ENCODE measurements at regions of chr1 and their contacts with region 1.

Region 1: GRCh38 chr1:40040511-40041465 is at the start of gene CAP1:
- DNase-seq: peak; percentile 91
- ATAC-seq: peak; percentile 88
- H3K4me3 ChIP-seq: peak within 1 kb of the TSS; percentile 92
- H3K27ac ChIP-seq: peak within 1 kb of the TSS; percentile 100
- H3K4me1 ChIP-seq: peaks cover 8% of the 10 kb centered on the region; the same call in 1 of the 2 replicates
- H3K27me3 ChIP-seq: no peaks in the 10 kb centered on the region
- CTCF ChIP-seq: no peak
- EP300 ChIP-seq: no peak
- POLR2A ChIP-seq: peak; percentile 81
- RAD21 ChIP-seq: no peak
- polyA plus RNA-seq, gene CAP1: 413 to 441 TPM

Region 2: GRCh38 chr1:40003156-40004148 is 37.3 kb before region 1 on chr1:
- CTCF ChIA-PET with region 1: interaction called, 5 read pairs
- POLR2A ChIA-PET with region 1: interaction called, 7 read pairs
- RAD21 ChIA-PET with region 1: interaction called, 10 read pairs
- SMC1A ChIA-PET with region 1: interaction called, 5 read pairs
- in situ Hi-C with region 1: no loop called
- intact Hi-C with region 1: no loop called
- DNase-seq: peak; percentile 53
- ATAC-seq: peak; percentile 95
- H3K4me3 ChIP-seq: 0 out of 2 replicates have a peak overlapping the region, but pooled peaks have one; percentile 16
- H3K27ac ChIP-seq: peak overlapping the region; percentile 89
- H3K4me1 ChIP-seq: peaks cover 42% of the 10 kb centered on the region
- H3K27me3 ChIP-seq: no peaks in the 10 kb centered on the region
- CTCF ChIP-seq: no peak
- EP300 ChIP-seq: no peak
- POLR2A ChIP-seq: no peak
- RAD21 ChIP-seq: no peak

Region 3: GRCh38 chr1:40059338-40059959 is 18.7 kb after region 1 on chr1:
- CTCF ChIA-PET with region 1: interaction called, 31 read pairs
- POLR2A ChIA-PET with region 1: interaction called, 15 read pairs
- RAD21 ChIA-PET with region 1: interaction called, 20 read pairs
- SMC1A ChIA-PET with region 1: interaction called, 25 read pairs
- in situ Hi-C with region 1: no loop called
- intact Hi-C with region 1: no loop called
- DNase-seq: no peak
- ATAC-seq: peak; percentile 82
- H3K4me3 ChIP-seq: peak overlapping the region; percentile 25; the same call in 1 of the 2 replicates
- H3K27ac ChIP-seq: peak overlapping the region; percentile 84
- H3K4me1 ChIP-seq: peaks cover 47% of the 10 kb centered on the region
- H3K27me3 ChIP-seq: no peaks in the 10 kb centered on the region
- CTCF ChIP-seq: peak; percentile 10 to 15 (median 11); a peak in 2 of 6 replicates
- EP300 ChIP-seq: no peak
- POLR2A ChIP-seq: no peak
- RAD21 ChIP-seq: no peak

Region 4: GRCh38 chr1:40064797-40065499 is 24.2 kb after region 1 on chr1:
- CTCF ChIA-PET with region 1: interaction called, 31 read pairs
- POLR2A ChIA-PET with region 1: interaction called, 15 read pairs
- RAD21 ChIA-PET with region 1: interaction called, 20 read pairs
- SMC1A ChIA-PET with region 1: interaction called, 25 read pairs
- in situ Hi-C with region 1: no loop called
- intact Hi-C with region 1: no loop called
- DNase-seq: peak; percentile 55
- ATAC-seq: peak; percentile 92
- H3K4me3 ChIP-seq: 0 out of 2 replicates have a peak overlapping the region, but pooled peaks have one; percentile 7
- H3K27ac ChIP-seq: peak overlapping the region; percentile 80
- H3K4me1 ChIP-seq: peaks cover 38% of the 10 kb centered on the region
- H3K27me3 ChIP-seq: no peaks in the 10 kb centered on the region
- CTCF ChIP-seq: no peak
- EP300 ChIP-seq: 0 out of 4 replicates have a peak, but pooled peaks of 1 of the 2 experiments have one; percentile 23
- POLR2A ChIP-seq: no peak
- RAD21 ChIP-seq: no peak

Measured in GM12878 (cell line).